ENCODE measurements at regions of chr3 and their contacts with region 1.

Region 1: GRCh38 chr3:169668957-169669681 is 5.6 kb upstream of the MECOM start:
- DNase-seq: peak; percentile 72
- H3K4me3 Mint-ChIP-seq: peak overlapping the region; percentile 75
- H3K27ac Mint-ChIP-seq: no peak overlapping the region
- H3K4me1 Mint-ChIP-seq: no peaks in the 10 kb centered on the region
- H3K27me3 Mint-ChIP-seq: peaks cover 29% of the 10 kb centered on the region
- CTCF ChIP-seq: peak; percentile 87

Region 2: DNA sequence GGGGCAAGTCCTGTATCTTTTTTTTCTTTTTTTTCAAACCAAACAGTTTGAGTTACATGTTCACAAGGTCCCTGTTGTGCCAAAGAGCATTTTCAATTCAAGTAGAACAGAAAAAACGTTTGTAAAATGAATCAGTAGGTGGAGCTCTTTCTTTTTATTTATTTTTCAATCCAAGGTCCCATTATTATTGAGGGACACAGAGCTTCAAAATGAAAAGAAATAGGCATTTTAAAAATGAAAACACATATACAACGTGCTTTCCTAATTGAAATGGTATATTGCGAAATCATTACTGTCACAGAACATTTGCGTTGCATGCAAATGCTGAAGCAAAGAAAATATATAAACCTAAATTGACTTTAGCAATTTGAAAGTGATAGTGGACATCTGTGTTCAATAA is 716.6 kb before region 1 on chr3:
- CTCF ChIA-PET with region 1: interaction called, 19 read pairs
- POLR2A ChIA-PET with region 1: interaction called, 3 read pairs
- intact Hi-C with region 1: loop called (anchors 2 kb)
- DNase-seq: peak; percentile 36
- H3K4me3 Mint-ChIP-seq: no peak overlapping the region
- H3K27ac Mint-ChIP-seq: no peak overlapping the region
- H3K4me1 Mint-ChIP-seq: peaks cover 5% of the 10 kb centered on the region
- H3K27me3 Mint-ChIP-seq: no peaks in the 10 kb centered on the region
- CTCF ChIP-seq: peak; percentile 45

Region 3: DNA sequence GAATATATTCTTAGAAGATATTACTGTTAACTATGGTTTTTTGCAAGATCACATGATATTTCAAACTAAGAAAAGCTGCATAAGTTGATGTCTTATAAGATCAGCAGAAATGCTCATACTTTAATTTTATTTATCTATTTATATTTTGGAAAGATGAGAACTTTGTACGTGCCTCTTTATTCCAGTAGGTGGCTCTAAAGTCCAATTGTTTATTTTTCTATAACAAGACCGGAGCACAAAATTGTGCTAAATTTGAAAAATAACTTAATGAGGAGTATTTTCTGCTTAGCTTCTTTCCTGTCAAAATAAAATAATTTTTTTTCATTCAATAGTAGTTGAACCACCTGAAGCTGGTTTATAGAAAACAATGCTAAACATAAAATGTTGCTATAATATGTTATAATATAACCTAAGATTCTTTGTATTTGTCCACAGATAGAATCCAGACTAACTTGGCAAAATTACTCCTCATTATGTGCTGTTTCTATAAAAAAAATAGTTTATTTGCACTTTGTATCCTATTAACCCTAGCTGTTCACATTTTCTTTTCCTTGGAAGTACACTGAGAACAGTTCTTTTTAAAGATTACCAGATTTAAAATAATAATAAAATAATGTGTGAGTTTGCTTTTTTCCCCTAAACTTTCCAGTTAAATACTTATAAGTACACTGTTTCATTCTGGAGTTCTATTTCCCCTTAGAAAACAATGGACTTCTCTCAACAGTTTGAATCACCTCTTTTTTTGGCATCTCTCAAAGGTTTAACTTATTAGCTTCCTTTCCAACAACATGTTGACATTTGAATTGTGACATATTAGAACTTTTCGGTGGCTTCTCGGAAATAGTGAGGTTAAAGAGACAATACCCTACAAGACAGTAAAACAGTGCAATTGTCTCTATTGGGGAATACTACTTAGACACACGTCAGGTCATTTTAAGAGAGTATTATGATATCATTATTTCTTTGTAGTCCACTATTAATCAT is 535.6 kb before region 1 on chr3:
- CTCF ChIA-PET with region 1: interaction called, 56 read pairs
- POLR2A ChIA-PET with region 1: no interaction called
- intact Hi-C with region 1: loop called (anchors 2 kb)
- DNase-seq: peak; percentile 33
- H3K4me3 Mint-ChIP-seq: no peak overlapping the region
- H3K27ac Mint-ChIP-seq: peak overlapping the region; percentile 6
- H3K4me1 Mint-ChIP-seq: peaks cover 5% of the 10 kb centered on the region
- H3K27me3 Mint-ChIP-seq: no peaks in the 10 kb centered on the region
- CTCF ChIP-seq: peak; percentile 49

Region 4: GRCh38 chr3:169218314-169218983 is 450.7 kb before region 1 on chr3:
- CTCF ChIA-PET with region 1: interaction called, 7 read pairs
- POLR2A ChIA-PET with region 1: no interaction called
- intact Hi-C with region 1: loop called (anchors 2 kb)
- DNase-seq: peak; percentile 58
- H3K4me3 Mint-ChIP-seq: no peak overlapping the region
- H3K27ac Mint-ChIP-seq: peak overlapping the region; percentile 53
- H3K4me1 Mint-ChIP-seq: peaks cover 9% of the 10 kb centered on the region
- H3K27me3 Mint-ChIP-seq: no peaks in the 10 kb centered on the region
- CTCF ChIP-seq: peak; percentile 31

Region 5: GRCh38 chr3:169295126-169295525 is 374.0 kb before region 1 on chr3:
- CTCF ChIA-PET with region 1: interaction called, 11 read pairs
- POLR2A ChIA-PET with region 1: no interaction called
- intact Hi-C with region 1: no loop called
- DNase-seq: peak; percentile 33
- H3K4me3 Mint-ChIP-seq: no peak overlapping the region
- H3K27ac Mint-ChIP-seq: no peak overlapping the region
- H3K4me1 Mint-ChIP-seq: no peaks in the 10 kb centered on the region
- H3K27me3 Mint-ChIP-seq: no peaks in the 10 kb centered on the region
- CTCF ChIP-seq: peak; percentile 52

Region 6: DNA sequence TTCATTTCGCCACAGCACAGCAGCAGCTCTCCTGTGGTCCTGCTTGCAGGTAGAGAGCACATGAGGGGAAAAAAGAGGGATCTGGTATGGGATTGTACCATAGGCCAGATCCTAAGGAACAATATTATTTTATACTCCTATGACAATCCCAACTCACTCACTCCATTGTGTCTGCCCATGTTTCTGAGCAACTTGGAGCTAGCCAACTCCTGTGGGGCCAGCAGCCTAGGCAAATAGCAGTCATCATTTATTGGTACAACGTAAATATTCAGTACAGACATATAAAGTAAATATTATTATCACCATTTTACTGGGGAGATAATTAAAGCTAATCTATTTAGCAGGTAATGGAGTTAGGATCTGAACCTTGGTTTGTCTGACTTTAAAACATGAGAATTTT is 154.0 kb before region 1 on chr3:
- CTCF ChIA-PET with region 1: no interaction called
- POLR2A ChIA-PET with region 1: no interaction called
- intact Hi-C with region 1: no loop called
- DNase-seq: no peak
- H3K4me3 Mint-ChIP-seq: no peak overlapping the region
- H3K27ac Mint-ChIP-seq: no peak overlapping the region
- H3K4me1 Mint-ChIP-seq: no peaks in the 10 kb centered on the region
- H3K27me3 Mint-ChIP-seq: no peaks in the 10 kb centered on the region
- CTCF ChIP-seq: no peak

Region 7: DNA sequence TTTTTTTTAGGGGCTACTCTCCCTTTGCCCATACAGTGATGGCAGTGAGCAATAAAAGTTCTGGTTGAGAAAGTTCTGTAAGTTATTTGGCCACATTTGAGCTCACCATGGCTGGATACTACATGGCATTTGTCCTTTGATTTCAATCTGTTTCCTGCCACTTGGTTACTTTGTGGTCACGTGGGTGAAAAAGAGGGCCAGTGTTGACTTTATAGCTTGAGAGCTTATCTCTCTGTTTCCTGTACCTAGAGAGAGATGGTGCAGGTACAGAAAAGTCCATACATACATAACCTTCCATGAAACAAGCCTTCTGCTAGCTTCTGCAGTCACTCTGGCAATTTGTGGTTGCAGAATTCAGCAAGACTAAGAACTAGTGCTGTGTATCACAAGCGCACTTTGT is 17.8 kb after region 1 on chr3:
- CTCF ChIA-PET with region 1: interaction called, 12 read pairs
- POLR2A ChIA-PET with region 1: no interaction called
- intact Hi-C with region 1: no loop called
- DNase-seq: no peak
- H3K4me3 Mint-ChIP-seq: no peak overlapping the region
- H3K27ac Mint-ChIP-seq: no peak overlapping the region
- H3K4me1 Mint-ChIP-seq: no peaks in the 10 kb centered on the region
- H3K27me3 Mint-ChIP-seq: no peaks in the 10 kb centered on the region
- CTCF ChIP-seq: no peak

Region 8: DNA sequence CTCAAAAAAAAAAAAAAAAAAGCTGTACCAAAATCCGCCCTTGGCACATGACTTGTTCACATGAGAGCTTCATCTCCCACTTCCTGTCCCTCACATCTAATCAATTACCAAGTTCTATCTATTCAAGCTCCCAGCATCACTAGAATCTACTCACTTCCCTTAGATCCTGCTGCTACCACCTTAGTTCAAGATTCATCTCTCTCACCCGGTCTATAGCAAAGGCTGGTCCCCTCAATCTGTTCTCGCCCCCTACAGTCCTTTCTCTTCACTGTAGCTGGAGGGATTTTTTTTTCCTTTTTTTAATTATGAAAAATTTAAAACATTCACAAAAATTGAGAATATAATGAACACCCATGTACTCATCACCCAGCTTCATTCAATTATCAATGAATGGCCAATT is 352.0 kb after region 1 on chr3:
- CTCF ChIA-PET with region 1: no interaction called
- POLR2A ChIA-PET with region 1: no interaction called
- intact Hi-C with region 1: no loop called
- DNase-seq: no peak
- H3K4me3 Mint-ChIP-seq: no peak overlapping the region
- H3K27ac Mint-ChIP-seq: no peak overlapping the region
- H3K4me1 Mint-ChIP-seq: no peaks in the 10 kb centered on the region
- H3K27me3 Mint-ChIP-seq: peaks cover 10% of the 10 kb centered on the region
- CTCF ChIP-seq: no peak

Measured in MCF 10A (cell line).